ENCODE measurements at regions of chr20 and their contacts with region 1.

Region 1: DNA sequence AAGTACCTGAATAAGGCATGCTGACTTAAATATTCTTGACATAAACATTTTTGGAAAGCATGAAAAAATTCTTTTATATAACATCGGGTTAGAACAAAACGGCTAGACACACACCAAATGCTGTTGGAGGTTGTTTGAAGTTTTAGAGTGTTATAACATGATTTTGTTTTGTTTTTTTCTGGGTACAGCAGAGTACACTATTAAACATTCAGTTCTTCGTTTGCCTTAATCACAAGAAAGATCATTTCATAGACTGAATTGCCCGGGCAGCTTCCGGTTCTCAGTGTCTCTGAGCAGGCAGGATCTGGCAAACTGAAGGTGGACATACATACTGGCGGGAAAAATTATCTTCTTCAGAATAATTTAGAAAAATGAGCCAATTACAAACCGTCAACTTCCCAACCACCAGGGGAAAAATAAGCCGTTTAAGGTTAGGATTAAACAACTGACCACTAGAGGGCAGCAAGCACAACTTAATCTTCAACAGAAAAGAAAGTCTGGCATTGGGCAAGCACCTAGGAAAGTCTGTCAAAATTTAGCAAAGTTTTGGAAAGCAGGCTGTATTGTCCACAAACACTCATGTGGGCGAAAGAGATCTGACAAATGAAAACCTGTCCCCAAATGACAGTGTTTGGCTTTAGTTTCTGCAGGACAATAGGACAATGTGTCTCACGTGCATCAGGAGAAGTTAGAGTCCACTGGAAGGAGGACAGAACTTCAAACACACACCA is 15.0 kb downstream of the ZNF217 start:
- DNase-seq: peak in 3 of 10 donors; percentile 23 to 75 (median 40)

Region 2: GRCh38 chr20:53708129-53708968 is 129.7 kb after region 1 on chr20:
- intact Hi-C with region 1: no loop called
- DNase-seq: no peak

Region 3: GRCh38 chr20:53869466-53870258 is 291.0 kb after region 1 on chr20:
- intact Hi-C with region 1: loop called (anchors 5 kb)
- DNase-seq: peak in 2 of 10 donors; percentile 13 to 30

Region 4: DNA sequence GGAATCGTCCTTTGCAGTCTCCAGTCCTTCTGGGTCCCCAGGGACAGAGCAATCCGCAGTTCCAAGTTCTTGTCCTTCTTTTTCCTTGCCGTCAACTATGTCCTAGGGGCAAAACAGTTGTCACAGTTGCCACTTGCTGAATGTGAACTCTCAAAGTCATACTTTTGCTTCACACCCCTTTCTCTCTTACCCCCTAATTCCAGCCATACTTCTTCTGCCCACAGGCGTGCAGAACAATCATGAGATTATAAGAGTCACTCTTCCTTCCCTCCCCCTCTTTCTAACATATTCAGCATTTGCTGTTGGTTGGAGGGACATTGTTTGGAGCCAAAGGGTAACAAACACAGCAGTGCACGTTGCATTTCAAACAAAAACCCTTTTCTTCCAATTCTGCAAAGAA is 417.3 kb after region 1 on chr20:
- intact Hi-C with region 1: no loop called
- DNase-seq: no peak

Region 5: DNA sequence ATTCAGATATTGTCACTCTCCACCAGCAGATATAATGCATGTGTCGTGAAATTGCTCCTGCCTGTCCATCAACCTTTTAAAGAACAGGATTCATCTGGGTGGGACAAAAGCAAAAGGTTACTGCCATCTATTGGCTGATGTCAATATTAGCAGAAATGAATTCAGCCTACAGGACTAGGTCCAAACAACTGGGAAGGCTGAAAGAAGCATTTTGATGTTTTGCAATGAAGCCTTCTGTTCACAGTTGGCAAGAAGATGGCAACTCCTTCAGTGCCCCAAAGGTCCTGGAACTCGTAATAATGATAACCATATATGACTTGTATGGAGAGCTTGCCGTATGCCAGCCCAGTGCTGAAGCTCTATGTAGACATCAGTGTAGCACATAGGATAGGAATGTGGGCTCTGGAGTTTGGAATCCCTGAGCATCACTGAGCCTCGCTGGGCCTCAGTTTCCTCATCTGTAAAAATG is 484.2 kb after region 1 on chr20:
- intact Hi-C with region 1: loop called (anchors 1 kb)
- DNase-seq: no peak